GM18951 (cell line): ENCODE measurements at regions of chr18 and their contacts with region 1.

Region 1: GRCh38 chr18:32714571-32715148 is 58.2 kb downstream of the KLHL14 start:
- POLR2A ChIP-seq: no peak

Region 2: GRCh38 chr18:32200766-32201165 is 513.9 kb before region 1 on chr18:
- in situ Hi-C with region 1: no loop called
- POLR2A ChIP-seq: no peak

Region 3: DNA sequence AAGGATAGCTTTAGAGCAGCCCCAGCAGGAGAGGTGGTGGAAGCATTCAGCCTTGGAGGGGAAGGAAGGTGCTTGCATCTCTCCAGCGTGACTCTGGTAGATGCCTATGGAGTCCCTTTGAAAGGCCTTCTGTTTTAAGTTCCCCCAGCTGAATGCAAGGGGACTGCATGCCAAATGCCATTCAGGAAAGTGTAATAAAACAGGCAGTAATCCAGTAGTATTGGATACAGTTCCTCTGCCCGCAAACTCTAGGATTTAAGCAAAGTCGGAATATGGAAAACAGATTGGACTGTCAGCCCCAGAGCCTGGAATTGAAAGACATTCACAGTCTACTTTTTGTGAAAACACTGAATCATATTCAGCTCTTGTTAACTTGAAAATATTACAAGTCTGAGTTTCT is 118.8 kb before region 1 on chr18:
- in situ Hi-C with region 1: no loop called
- POLR2A ChIP-seq: no peak

Region 4: DNA sequence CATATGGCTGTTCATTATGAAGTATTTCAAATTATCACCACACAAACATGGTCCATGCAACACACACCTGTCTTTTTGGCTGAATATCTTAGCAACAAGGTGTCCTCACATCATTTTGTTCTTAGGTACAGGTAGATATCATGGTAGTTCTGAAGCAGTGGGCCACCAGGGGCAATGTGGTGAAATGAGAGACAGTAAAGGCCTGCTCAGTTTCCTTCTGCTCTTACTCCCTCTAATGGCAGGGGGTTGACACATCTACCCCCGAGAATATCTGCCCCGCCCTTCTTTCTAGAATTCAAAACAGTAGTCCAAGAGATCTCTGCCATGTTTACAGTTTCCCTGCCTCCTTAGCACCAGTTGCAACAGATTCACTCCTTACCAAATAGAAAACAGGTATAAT is 205.1 kb after region 1 on chr18:
- in situ Hi-C with region 1: loop called (anchors 10 kb)
- POLR2A ChIP-seq: no peak